PC-3 (cell line): ENCODE measurements at regions of chr9 and their contacts with region 1.

Region 1: DNA sequence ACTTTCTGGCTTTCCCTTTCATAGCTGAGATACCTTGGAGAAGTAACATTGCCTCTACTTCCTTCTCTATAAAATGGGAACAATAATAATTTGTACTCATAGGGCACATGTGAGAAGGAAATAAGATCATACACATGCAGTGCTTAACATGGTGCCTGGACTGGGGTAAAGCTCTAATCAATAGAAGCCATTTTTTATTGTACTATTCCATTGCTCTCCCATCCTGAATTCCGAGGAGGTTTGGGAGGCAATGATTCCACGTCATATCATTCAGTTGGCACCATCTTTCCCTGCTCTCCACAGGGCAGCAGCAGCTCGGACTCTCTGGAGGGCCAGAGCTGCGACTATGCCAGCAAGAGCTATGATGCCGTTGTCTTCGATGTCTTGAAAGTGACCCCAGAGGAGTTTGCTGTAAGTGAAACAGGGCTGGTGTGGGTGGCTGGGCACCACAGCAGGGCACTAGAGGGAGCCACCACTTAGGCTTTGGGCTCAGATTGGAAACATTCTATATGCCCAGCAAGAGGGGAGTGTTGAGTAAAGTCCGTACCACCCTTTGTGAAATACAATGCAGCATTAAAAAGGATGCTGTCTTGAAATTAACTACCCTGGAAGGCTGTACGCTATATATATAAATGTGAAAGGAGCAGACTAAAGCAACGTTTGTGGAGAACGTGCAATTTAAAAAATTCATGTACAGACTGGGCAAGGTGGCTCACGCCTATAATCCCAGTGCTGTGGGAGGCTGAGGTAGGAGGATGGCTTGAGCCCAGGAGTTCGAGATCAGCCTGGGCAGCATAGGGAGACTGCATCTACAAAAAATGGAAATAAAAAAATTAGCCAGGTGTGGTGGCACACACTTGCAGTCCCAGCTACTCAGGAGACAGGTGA is 51.2 kb downstream of the RALGPS1 start:
- DNase-seq: peak; percentile 55
- ATAC-seq: peak; percentile 93
- H3K4me3 ChIP-seq: no peak overlapping the region
- H3K27ac ChIP-seq: 0 out of 2 replicates have a peak overlapping the region, but pooled peaks have one; percentile 12
- H3K4me1 ChIP-seq: peaks cover 16% of the 10 kb centered on the region
- H3K27me3 ChIP-seq: no peaks in the 10 kb centered on the region
- CTCF ChIP-seq: peak; percentile 92

Region 2: DNA sequence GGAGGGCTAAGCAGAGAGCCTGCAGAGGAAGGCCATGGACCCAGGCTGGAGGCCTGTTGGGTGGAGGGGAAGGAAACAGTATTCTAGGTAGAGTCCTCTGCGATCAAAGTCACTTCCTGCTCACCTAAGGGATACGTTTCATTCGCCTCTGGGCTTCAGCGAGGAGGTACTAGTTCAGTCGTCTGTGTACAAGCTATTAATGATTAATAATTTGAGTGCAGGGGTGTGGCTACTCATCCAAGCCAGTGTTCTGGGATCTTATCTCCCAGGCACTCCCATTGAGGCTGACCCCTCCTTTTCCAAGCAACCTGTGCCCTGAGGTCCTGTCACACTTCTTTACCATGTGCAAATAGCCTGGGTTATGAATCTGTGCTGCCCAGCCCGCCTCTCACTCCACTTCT is 26.0 kb before region 1 on chr9:
- CTCF ChIA-PET with region 1: interaction called, 3 read pairs
- POLR2A ChIA-PET with region 1: no interaction called
- intact Hi-C with region 1: loop called (anchors 1 kb)
- DNase-seq: no peak
- ATAC-seq: no peak; the same call in 1 of the 2 replicates
- H3K4me3 ChIP-seq: no peak overlapping the region
- H3K27ac ChIP-seq: no peak overlapping the region
- H3K4me1 ChIP-seq: no peaks in the 10 kb centered on the region
- H3K27me3 ChIP-seq: no peaks in the 10 kb centered on the region
- CTCF ChIP-seq: no peak

Region 3: GRCh38 chr9:127014216-127014615 is 48.4 kb after region 1 on chr9:
- CTCF ChIA-PET with region 1: no interaction called
- POLR2A ChIA-PET with region 1: no interaction called
- intact Hi-C with region 1: loop called (anchors 5 kb)
- DNase-seq: no peak
- ATAC-seq: no peak
- H3K4me3 ChIP-seq: no peak overlapping the region
- H3K27ac ChIP-seq: no peak overlapping the region
- H3K4me1 ChIP-seq: peaks cover 10% of the 10 kb centered on the region; the same call in 1 of the 2 replicates
- H3K27me3 ChIP-seq: no peaks in the 10 kb centered on the region
- CTCF ChIP-seq: no peak

Region 4: GRCh38 chr9:127049044-127049443 is 83.3 kb after region 1 on chr9:
- CTCF ChIA-PET with region 1: interaction called, 3 read pairs
- POLR2A ChIA-PET with region 1: no interaction called
- intact Hi-C with region 1: loop called (anchors 2 kb)
- DNase-seq: peak; percentile 92
- ATAC-seq: peak; percentile 96
- H3K4me3 ChIP-seq: peak overlapping the region; percentile 47; the same call in 1 of the 2 replicates
- H3K27ac ChIP-seq: peak overlapping the region; percentile 83
- H3K4me1 ChIP-seq: peaks cover 21% of the 10 kb centered on the region
- H3K27me3 ChIP-seq: no peaks in the 10 kb centered on the region
- CTCF ChIP-seq: peak; percentile 39; the same call in 1 of the 2 replicates

Region 5: DNA sequence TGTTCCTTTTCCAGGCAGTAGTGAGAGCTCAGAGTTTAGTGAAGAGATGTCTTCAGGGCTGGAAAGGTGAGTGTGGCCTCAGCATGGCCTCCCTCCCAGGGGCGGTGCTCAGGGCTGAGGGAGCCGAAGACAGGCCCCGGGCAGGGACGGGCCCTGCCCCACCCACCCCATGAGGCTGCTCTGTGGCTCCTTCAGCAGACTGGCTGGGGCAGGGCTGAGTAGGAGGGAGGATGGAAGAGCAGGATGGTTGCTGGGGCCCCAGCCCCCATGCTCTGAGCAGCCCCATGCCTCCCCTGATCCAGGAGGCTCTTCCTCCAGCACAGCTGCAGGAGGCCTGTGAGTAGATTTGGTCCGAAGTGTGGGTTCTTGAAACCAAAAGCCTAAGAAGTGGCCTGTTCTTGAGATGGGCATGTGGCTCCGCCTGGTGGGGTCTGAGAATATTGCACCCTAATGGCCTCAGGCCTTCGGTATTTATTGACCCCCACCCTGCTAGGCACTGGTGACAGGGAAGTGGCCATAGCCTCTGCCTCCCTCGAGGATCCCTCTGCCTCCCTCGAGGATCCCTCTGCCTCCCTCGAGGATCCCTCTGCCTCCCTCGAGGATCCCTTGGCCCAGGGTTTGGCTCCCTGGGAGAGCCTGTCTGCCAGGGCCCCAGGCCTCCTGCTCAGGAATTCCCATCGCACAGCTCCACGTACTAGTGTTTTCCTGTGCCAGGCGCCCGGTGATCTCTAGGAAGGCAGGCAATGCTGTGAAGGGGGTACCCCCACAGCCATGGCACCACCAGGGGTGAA is 233.4 kb after region 1 on chr9:
- CTCF ChIA-PET with region 1: no interaction called
- POLR2A ChIA-PET with region 1: no interaction called
- intact Hi-C with region 1: loop called (anchors 1 kb)
- DNase-seq: peak; percentile 78
- ATAC-seq: peak; percentile 65
- H3K4me3 ChIP-seq: no peak overlapping the region
- H3K27ac ChIP-seq: no peak overlapping the region
- H3K4me1 ChIP-seq: peaks cover 16% of the 10 kb centered on the region
- H3K27me3 ChIP-seq: no peaks in the 10 kb centered on the region
- CTCF ChIP-seq: peak; percentile 80